ENCODE measurements at regions of chr10 and their contacts with region 1.

Region 1: DNA sequence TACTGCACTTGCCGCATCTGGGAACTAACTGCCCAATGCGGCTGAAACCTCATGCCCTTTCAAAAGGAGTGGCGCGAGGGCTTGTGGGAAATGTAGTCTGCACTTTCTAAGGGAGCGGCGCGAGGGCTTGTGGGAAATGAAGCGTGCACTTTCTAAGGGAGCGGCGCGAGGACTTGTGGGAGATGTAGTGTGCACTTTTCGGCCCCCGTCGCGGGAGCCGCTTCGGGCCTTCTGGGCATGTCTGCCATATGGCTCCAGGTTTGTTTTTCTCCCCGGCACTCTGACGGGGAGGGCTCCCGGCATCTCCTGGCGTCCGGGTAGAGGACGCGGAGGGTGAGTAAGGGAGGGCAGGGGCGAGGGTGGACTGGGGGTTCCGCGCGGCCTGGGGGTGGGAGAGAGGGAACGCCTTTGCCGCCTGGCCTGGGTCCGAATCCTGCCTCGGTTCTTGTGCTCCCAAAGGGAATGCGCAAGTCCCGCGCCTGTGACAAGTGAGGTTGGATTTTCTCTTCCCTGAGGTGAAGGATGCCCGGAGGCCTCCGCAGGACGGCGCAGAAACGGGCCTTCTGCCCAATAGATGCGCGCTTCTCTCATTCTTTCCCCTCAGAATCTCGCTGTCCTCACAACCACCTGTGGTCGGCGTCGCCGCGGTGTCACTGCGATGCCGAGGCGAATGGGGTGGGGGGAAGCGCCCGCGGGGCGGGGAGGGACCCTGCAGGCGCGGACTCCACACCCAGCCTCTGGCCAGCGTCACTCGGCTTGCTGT is at the start of gene ZNF37A:
- DNase-seq: peak; percentile 60 to 90 (median 82)
- ATAC-seq: peak; percentile 98
- H3K4me3 ChIP-seq: peak within 1 kb of the TSS; percentile 99
- H3K4me3 Mint-ChIP-seq: peak within 1 kb of the TSS; percentile 88 to 95 (median 94)
- H3K27ac ChIP-seq: peak within 1 kb of the TSS; percentile 84
- H3K27ac Mint-ChIP-seq: peak within 1 kb of the TSS; percentile 87 to 98 (median 93)
- H3K4me1 ChIP-seq: peaks cover 9 to 12% of the 10 kb centered on the region in 2 donors
- H3K4me1 Mint-ChIP-seq: peaks cover 16 to 47% (median 37%) of the 10 kb centered on the region in 7 donors
- H3K27me3 ChIP-seq: no peaks in the 10 kb centered on the region
- H3K27me3 Mint-ChIP-seq: no peaks in the 10 kb centered on the region
- total RNA-seq, gene ZNF37A: 14.2 to 29.8 (median 26.9) TPM

Region 2: DNA sequence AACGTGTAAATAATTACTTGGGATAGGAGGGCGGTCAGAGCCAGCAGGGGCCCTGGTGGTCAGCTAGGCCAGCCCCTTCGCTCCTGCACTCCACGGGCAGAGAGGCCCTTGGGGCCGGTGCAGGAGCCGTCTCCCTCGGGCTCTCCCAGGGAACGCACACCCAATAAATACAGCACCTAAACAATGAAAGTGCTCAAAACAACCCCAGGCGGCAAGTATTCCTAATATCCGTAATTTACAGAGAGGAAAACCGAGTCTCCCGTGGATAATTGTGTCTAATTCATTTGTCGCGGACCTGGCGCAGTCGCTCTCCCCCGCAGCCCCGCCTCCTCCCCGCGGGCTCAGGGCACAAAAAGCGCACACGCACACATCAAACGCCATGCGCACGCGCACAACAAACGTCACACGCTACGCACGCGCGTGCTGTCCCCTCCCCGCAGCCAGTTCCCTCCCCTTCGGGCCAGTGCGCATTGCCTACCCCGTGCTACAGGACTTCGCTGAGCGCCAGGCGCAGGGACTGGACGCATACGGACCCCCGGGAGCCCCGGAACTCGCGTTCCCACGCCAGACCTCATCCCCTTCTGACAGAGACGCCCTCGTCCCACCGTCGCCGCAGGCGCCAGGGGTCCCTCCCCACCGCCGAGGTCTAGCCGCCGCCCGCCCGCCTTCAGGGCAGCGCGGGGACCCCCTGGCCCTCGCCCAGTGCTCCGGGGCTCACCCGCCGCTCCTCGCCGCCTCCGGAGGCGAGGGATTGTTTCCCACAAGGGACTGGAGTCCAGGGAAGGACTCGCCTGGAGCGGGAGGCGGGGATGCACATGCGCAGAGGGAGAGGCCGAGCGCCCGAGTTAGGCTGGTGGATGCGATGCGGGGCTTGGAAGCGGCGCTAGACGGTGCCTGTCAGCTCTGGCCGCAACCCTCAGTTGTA is 236.8 kb before region 1 on chr10 and contains the start of gene ZNF248:
- CTCF ChIA-PET with region 1: no interaction called
- POLR2A ChIA-PET with region 1: no interaction called
- intact Hi-C with region 1: loop called (anchors 1 kb)
- DNase-seq: peak; percentile 91 to 95 (median 94)
- ATAC-seq: peak; percentile 98
- H3K4me3 ChIP-seq: peak within 1 kb of the TSS; percentile 93
- H3K4me3 Mint-ChIP-seq: peak within 1 kb of the TSS; percentile 89 to 98 (median 94)
- H3K27ac ChIP-seq: peak within 1 kb of the TSS; percentile 96
- H3K27ac Mint-ChIP-seq: peak within 1 kb of the TSS; percentile 86 to 99 (median 98)
- H3K4me1 ChIP-seq: peaks cover 9 to 23% of the 10 kb centered on the region in 2 donors
- H3K4me1 Mint-ChIP-seq: peaks cover 30 to 53% (median 45%) of the 10 kb centered on the region in 7 donors
- H3K27me3 ChIP-seq: no peaks in the 10 kb centered on the region
- H3K27me3 Mint-ChIP-seq: peaks cover 0 to 2% (median 0%) of the 10 kb centered on the region in 5 donors
- total RNA-seq, gene ZNF248: 5.4 to 26.9 (median 11.0) TPM

Region 3: GRCh38 chr10:37976091-37976879 is 118.1 kb before region 1 on chr10 and contains the start of gene ZNF25:
- CTCF ChIA-PET with region 1: interaction called, 5 read pairs
- POLR2A ChIA-PET with region 1: interaction called, 25 read pairs
- intact Hi-C with region 1: loop called (anchors 1 kb)
- DNase-seq: peak; percentile 83 to 97 (median 96)
- ATAC-seq: peak; percentile 94
- H3K4me3 ChIP-seq: peak within 1 kb of the TSS; percentile 62
- H3K4me3 Mint-ChIP-seq: peak within 1 kb of the TSS; percentile 87 to 100 (median 95)
- H3K27ac ChIP-seq: peak within 1 kb of the TSS; percentile 95
- H3K27ac Mint-ChIP-seq: peak within 1 kb of the TSS; percentile 92 to 99 (median 97)
- H3K4me1 ChIP-seq: peaks cover 6 to 10% of the 10 kb centered on the region in 2 donors
- H3K4me1 Mint-ChIP-seq: peaks cover 19 to 36% (median 27%) of the 10 kb centered on the region in 7 donors
- H3K27me3 ChIP-seq: no peaks in the 10 kb centered on the region
- H3K27me3 Mint-ChIP-seq: peaks cover 0 to 2% (median 0%) of the 10 kb centered on the region in 5 donors
- total RNA-seq, gene ZNF25: 7.0 to 13.9 (median 10.1) TPM

Region 4: DNA sequence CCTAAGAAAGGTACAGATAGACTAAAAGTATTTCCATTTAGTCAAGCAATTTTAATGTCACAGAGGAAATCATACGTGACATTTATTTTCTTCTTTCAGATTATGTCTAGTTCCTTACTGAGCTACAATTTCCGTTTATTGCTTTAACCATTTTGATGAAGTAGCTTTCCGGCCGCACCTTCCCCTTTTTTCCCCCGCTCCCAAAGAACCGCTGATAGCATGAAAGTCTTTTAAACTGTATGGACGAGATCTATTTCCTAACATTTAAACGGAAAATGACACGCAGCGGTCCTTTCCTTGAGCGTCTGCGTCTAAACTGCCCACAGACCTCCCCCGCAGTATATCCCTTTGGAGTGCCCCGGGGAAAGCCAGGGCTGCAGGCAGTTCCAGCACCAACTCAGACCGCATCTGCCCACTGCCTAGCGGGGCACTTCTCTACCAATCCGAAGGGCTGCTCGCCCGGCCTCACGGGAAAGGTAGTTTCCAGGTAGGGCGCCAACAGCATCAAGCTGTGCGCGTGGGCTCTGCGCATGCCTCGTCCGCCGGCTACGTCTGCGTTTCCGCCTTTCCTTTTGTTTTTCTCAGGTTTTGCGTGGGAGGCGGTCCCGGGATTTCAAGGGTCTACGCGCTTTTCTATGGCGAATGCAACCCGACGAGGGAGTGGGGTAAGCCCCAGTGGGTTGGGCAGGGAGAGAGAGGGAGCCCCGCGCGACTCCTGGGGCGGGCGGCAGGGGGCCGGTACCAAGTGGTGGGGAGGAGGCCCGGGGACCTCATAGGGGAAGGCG is 84.0 kb before region 1 on chr10 and contains the start of gene ZNF33A:
- CTCF ChIA-PET with region 1: interaction called, 3 read pairs
- POLR2A ChIA-PET with region 1: interaction called, 15 read pairs
- intact Hi-C with region 1: loop called (anchors 1 kb)
- DNase-seq: peak in 8 of 9 donors; percentile 80 to 96 (median 94)
- ATAC-seq: peak; percentile 88
- H3K4me3 ChIP-seq: peak within 1 kb of the TSS; percentile 94
- H3K4me3 Mint-ChIP-seq: peak within 1 kb of the TSS; percentile 85 to 96 (median 91)
- H3K27ac ChIP-seq: peak within 1 kb of the TSS; percentile 96
- H3K27ac Mint-ChIP-seq: peak within 1 kb of the TSS; percentile 95 to 100 (median 98)
- H3K4me1 ChIP-seq: peaks cover 14% of the 10 kb centered on the region in 2 donors
- H3K4me1 Mint-ChIP-seq: peaks cover 11 to 51% (median 37%) of the 10 kb centered on the region in 7 donors
- H3K27me3 ChIP-seq: no peaks in the 10 kb centered on the region
- H3K27me3 Mint-ChIP-seq: no peaks in the 10 kb centered on the region
- total RNA-seq, gene ZNF33A: 36.5 to 74.2 (median 46.3) TPM

Region 5: GRCh38 chr10:38038107-38038931 is 56.0 kb before region 1 on chr10:
- CTCF ChIA-PET with region 1: no interaction called
- POLR2A ChIA-PET with region 1: no interaction called
- intact Hi-C with region 1: loop called in 1 of 2 experiments (anchors 1 kb)
- DNase-seq: peak in 3 of 9 donors; percentile 5 to 27 (median 13)
- ATAC-seq: peak; percentile 72
- H3K4me3 ChIP-seq: peak overlapping the region; percentile 17
- H3K4me3 Mint-ChIP-seq: peak overlapping the region in 9 of 10 donors; percentile 32 to 86 (median 78)
- H3K27ac ChIP-seq: peak overlapping the region; percentile 55
- H3K27ac Mint-ChIP-seq: peak overlapping the region; percentile 0 to 97 (median 80)
- H3K4me1 ChIP-seq: no peaks in the 10 kb centered on the region
- H3K4me1 Mint-ChIP-seq: peaks cover 21 to 55% (median 47%) of the 10 kb centered on the region in 7 donors
- H3K27me3 ChIP-seq: no peaks in the 10 kb centered on the region
- H3K27me3 Mint-ChIP-seq: no peaks in the 10 kb centered on the region

Measured in naive thymus-derived CD4-positive, alpha-beta T cell (primary cell).